ENCODE measurements at regions of chr20 and their contacts with region 1.

Region 1: DNA sequence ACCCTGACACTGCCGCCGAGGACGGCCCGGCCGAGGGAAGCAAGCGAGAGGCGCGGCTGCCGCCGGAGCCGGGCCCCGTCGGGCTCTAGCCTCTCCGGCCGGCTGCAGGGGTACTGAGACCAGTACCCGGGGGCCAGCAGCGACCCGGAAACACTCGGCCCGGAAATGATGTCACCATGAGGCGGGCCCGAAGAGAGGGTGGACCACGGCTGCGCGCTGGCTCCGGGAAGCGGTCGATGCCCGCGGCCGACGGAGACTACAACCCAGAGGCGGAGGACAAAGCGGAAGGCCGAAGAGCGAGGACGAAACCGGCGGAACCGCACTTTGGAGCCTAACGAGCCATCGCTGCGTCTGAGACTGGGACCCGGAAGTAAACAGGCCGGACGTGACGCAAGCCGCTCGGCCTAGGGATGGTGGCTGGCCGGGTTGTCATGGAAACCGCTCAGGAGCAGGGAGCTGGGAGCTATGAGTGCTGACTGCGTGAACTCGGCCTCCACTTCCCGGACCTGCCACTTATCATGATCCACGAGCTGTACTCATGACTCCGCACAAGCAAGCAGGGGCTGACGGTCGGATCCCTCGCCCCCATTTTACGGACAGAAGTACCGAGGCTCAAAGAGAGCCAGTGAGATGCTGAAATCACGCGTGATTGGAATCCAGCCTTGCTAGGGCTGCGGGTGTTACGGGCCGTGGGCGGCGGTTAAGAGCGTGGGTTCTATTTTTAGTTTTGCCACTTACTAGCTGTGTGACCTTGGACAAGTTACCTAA is at the start of gene SPATA2:
- DNase-seq: peak; percentile 87 to 98 (median 95)
- ATAC-seq: peak; percentile 75
- H3K4me3 ChIP-seq: peak within 1 kb of the TSS; percentile 67 to 100
- H3K4me3 Mint-ChIP-seq: peak within 1 kb of the TSS; percentile 98
- H3K27ac ChIP-seq: peak within 1 kb of the TSS; percentile 99 to 100
- H3K27ac Mint-ChIP-seq: peak within 1 kb of the TSS; percentile 100
- H3K4me1 ChIP-seq: peaks cover 21% of the 10 kb centered on the region
- H3K4me1 Mint-ChIP-seq: peaks cover 39% of the 10 kb centered on the region
- H3K27me3 ChIP-seq: no peaks in the 10 kb centered on the region
- H3K27me3 Mint-ChIP-seq: no peaks in the 10 kb centered on the region
- CTCF ChIP-seq: no peak
- total RNA-seq, gene SPATA2: 20.9 to 22.4 TPM

Region 2: DNA sequence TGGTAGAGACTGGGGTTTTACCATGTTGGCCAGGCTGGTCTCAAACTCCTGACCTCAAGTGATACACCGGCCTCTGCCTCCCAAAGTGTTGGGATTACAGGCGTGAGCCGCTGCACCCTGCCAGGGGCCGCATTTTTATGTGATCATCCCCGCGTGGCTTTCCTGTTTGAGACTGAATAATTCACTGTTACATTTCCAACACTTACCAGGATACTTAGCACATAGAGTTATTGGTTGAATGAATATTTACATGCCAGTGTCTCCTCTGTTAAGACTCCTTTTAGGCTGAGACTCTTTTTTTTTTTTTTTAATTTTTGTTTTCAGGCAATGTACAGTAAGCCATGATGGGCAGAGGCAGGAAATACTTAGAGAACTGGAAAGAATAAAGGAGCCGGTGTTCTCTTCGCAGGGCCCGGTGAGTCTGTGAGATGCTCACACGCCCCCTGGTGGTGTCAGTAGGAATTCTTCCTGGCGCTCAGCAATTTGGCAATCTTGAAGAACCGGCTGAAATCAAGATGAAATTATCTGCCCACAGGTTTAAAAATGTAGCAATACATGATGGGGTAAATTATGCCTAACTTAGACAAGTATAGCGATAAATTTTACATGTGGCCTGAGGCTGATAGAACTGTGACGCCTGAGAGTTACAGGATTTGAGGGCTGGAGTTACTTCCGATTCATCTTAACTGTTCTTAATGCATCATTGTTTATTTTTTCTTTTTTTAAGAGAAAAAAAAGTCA is 13.0 kb after region 1 on chr20:
- CTCF ChIA-PET with region 1: interaction called, 6 read pairs
- POLR2A ChIA-PET with region 1: no interaction called
- intact Hi-C with region 1: loop called (anchors 2 kb)
- DNase-seq: peak; percentile 57 to 88 (median 82)
- ATAC-seq: peak; percentile 99
- H3K4me3 ChIP-seq: no peak overlapping the region
- H3K4me3 Mint-ChIP-seq: peak overlapping the region; percentile 27
- H3K27ac ChIP-seq: no peak overlapping the region
- H3K27ac Mint-ChIP-seq: peak overlapping the region; percentile 46
- H3K4me1 ChIP-seq: peaks cover 6% of the 10 kb centered on the region
- H3K4me1 Mint-ChIP-seq: peaks cover 8% of the 10 kb centered on the region
- H3K27me3 ChIP-seq: no peaks in the 10 kb centered on the region
- H3K27me3 Mint-ChIP-seq: peaks cover 2% of the 10 kb centered on the region
- CTCF ChIP-seq: peak; percentile 95

Region 3: DNA sequence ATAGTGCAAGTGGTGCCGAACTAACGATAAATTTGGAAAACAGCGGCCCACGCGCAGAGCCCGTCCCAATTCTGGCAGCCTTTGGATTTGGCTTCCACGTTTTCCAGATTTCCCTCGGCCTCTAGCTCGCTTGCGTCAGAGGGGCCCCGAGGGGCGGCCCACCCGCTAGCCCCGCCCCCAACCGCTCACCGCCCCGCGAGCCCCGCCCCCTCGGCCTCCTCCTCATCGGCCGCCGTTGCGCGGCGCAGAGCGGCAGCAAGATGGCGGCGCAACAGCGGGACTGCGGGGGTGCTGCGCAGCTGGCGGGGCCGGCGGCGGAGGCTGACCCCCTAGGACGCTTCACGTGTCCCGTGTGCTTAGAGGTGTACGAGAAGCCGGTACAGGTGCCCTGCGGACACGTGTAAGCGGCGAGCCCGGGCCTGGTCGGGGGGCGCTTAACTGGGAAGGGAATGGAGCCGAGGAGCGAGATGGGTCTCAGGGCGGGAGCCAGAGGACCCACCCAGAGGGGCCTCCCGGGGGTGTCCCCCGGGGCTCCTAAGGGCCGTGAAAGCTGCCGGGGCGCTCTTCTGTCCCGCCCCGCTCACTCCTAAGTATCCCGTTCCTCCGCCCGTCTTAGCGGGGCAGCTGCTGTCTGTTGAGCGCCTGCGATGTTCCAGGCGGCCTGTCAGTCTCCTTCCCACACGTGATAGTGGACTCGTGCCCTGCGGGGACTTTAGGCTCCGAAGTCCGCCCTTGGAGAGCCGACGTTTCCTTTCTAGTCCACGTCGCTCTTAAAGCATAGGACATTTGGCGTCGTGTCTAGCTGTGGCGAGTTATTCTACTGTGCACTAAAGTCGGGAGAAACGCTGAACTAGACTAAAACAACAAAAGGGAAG is 20.8 kb after region 1 on chr20 and contains the start of gene RNF114:
- CTCF ChIA-PET with region 1: interaction called, 8 read pairs
- POLR2A ChIA-PET with region 1: interaction called, 8 read pairs
- intact Hi-C with region 1: loop called (anchors 1 kb)
- DNase-seq: peak; percentile 82 to 95 (median 90)
- ATAC-seq: peak; percentile 96
- H3K4me3 ChIP-seq: peak within 1 kb of the TSS; percentile 96 to 99
- H3K4me3 Mint-ChIP-seq: peak within 1 kb of the TSS; percentile 98
- H3K27ac ChIP-seq: peak within 1 kb of the TSS; percentile 89 to 95
- H3K27ac Mint-ChIP-seq: peak within 1 kb of the TSS; percentile 96
- H3K4me1 ChIP-seq: peaks cover 30% of the 10 kb centered on the region
- H3K4me1 Mint-ChIP-seq: peaks cover 46% of the 10 kb centered on the region
- H3K27me3 ChIP-seq: no peaks in the 10 kb centered on the region
- H3K27me3 Mint-ChIP-seq: no peaks in the 10 kb centered on the region
- CTCF ChIP-seq: no peak
- total RNA-seq, gene RNF114: 137 to 151 TPM